ENCODE measurements at regions of chr1 and their contacts with region 1.

Region 1: DNA sequence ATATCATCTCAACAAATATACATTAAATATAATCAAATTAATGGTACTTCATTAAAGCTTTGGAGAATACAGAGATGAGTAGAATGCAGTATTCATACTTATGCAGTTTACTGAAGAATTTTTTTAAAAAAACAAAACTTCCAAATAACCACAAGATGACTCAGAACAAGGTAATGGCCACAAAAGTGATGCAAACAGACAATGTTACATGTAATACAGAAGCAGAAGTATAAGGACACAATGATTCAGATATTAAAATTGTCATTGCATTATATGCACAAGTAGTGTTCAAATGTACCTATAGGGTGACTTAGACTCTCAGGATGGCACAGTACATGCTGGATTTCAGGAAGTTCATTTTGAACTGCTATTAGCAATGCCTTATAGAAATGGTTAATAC is 227.2 kb upstream of the ST6GALNAC5 start:
- DNase-seq: peak; percentile 11
- ATAC-seq: no peak
- H3K4me3 ChIP-seq: no peak overlapping the region
- H3K27ac ChIP-seq: no peak overlapping the region
- H3K4me1 ChIP-seq: no peaks in the 10 kb centered on the region
- H3K27me3 ChIP-seq: no peaks in the 10 kb centered on the region
- CTCF ChIP-seq: no peak
- POLR2A ChIP-seq: no peak
- RAD21 ChIP-seq: no peak

Region 2: GRCh38 chr1:76170513-76170912 is 469.6 kb before region 1 on chr1:
- CTCF ChIA-PET with region 1: no interaction called
- POLR2A ChIA-PET with region 1: no interaction called
- dilution Hi-C with region 1: no loop called
- in situ Hi-C with region 1: no loop called
- intact Hi-C with region 1: loop called (anchors 5 kb)
- DNase-seq: no peak
- ATAC-seq: no peak
- H3K4me3 ChIP-seq: no peak overlapping the region
- H3K27ac ChIP-seq: no peak overlapping the region
- H3K4me1 ChIP-seq: no peaks in the 10 kb centered on the region
- H3K27me3 ChIP-seq: no peaks in the 10 kb centered on the region
- CTCF ChIP-seq: no peak
- POLR2A ChIP-seq: no peak
- RAD21 ChIP-seq: no peak

Measured in IMR-90 (cell line).